ENCODE measurements at regions of chr7 and their contacts with region 1.

Region 1: DNA sequence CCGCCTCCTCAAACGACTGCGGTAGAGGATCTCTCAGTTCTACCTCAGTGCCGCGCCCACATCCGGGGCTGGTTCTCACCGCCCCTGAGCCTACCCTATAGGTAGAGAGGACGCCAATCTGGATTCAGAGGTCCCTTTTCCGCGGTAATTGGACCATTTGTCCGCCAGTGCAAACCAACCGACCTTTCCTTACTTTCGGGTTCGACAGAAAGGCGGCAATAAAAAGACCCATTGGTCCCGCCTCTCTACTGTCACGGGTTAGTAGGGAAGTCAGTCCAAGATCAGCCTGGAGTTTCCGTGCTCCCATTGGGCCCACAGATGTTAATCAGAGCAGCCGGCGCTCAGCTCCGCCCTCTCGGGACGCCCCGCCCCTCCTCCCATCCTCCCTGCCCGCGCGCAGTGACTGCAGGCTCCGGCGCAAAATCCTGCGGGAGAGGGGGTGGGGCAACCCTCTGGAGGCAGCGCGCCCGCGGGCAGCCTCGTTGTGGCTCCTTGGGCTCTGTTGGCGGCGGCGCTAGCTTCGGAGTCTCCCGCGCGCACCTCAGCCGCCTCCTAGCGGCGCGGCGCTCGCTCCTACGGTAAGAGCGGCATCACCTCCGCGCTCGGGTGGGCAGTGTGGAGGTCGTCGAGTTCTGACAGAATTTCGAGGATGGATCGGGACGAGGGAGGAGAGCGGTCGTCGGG is at the starts of genes PHTF2 and TMEM60:
- DNase-seq: peak; percentile 100
- ATAC-seq: peak; percentile 93
- H3K4me3 ChIP-seq: peak within 1 kb of the TSS; percentile 81
- H3K27ac ChIP-seq: peak within 1 kb of the TSS; percentile 90
- H3K4me1 ChIP-seq: peaks cover 6% of the 10 kb centered on the region; the same call in 1 of the 2 replicates
- H3K27me3 ChIP-seq: no peaks in the 10 kb centered on the region
- CTCF ChIP-seq: peak; percentile 53
- POLR2A ChIP-seq: peak; percentile 48
- RAD21 ChIP-seq: peak; percentile 52
- total RNA-seq, gene PHTF2: 65.5 and 69.9 TPM in 2 replicates
- total RNA-seq, gene TMEM60: 9.9 and 19.2 TPM in 2 replicates

Region 2: DNA sequence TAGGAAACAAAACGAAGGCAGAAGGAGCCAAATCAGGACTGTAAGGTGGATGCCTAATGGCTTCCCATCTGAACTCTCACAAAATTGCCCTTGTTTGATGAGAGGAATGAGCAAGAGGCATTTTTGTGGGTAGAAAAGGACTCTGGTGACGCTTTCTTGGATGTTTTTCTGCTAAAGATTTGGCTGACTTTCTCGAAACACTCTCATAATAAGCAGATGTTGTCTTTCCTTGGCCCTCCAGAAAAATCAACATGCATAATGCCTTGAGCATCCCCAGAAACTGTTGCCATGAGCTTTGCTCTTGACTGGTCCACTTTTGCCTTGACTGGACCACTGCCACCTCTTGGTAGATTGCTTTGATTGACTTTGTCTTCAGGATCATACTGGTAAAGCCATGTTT is 247.9 kb before region 1 on chr7:
- CTCF ChIA-PET with region 1: no interaction called
- POLR2A ChIA-PET with region 1: no interaction called
- dilution Hi-C with region 1: no loop called
- in situ Hi-C with region 1: no loop called
- intact Hi-C with region 1: no loop called
- DNase-seq: peak; percentile 22
- ATAC-seq: no peak
- H3K4me3 ChIP-seq: no peak overlapping the region
- H3K27ac ChIP-seq: no peak overlapping the region
- H3K4me1 ChIP-seq: peaks cover 5% of the 10 kb centered on the region; the same call in 1 of the 2 replicates
- H3K27me3 ChIP-seq: no peaks in the 10 kb centered on the region
- CTCF ChIP-seq: no peak
- POLR2A ChIP-seq: no peak
- RAD21 ChIP-seq: no peak

Region 3: DNA sequence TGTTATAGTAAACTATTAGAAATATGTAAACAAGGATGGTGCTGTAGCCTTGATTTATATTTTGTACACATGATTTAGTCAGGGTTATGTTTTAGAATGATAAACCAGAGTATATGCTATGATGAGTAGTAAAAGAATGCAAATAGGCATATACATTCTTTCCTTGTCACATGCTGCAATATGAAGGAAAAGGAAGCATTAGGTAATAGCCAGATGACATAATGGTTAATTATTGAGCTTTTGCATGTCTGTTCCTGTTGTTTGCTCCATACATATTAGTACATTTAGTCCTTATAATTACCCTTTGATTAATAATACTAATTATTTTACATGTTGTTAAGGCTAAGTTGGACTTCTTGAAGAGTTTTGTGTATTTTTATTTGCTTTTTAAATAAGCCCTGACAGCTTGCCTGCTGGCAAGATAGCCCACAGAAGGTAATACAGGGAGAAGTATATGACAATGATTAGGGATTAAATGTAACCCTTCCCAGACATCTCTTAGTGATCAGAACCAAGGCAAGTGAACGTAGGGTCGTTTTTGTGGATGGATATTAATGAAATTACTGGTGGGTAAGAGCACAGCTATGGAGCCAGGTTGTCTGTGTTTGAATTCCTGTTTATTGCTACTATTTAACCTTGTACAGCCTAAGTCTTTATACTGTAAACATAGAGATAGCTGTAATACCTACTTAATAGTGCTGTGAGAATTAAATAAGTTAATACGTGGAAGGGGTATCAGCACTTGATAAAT is 68.4 kb after region 1 on chr7:
- CTCF ChIA-PET with region 1: no interaction called
- POLR2A ChIA-PET with region 1: no interaction called
- dilution Hi-C with region 1: no loop called
- in situ Hi-C with region 1: no loop called
- intact Hi-C with region 1: loop called (anchors 2 kb)
- DNase-seq: peak; percentile 87
- ATAC-seq: peak; percentile 88
- H3K4me3 ChIP-seq: no peak overlapping the region
- H3K27ac ChIP-seq: peak overlapping the region; percentile 50
- H3K4me1 ChIP-seq: peaks cover 5% of the 10 kb centered on the region
- H3K27me3 ChIP-seq: no peaks in the 10 kb centered on the region
- CTCF ChIP-seq: no peak
- POLR2A ChIP-seq: no peak
- RAD21 ChIP-seq: no peak

Region 4: DNA sequence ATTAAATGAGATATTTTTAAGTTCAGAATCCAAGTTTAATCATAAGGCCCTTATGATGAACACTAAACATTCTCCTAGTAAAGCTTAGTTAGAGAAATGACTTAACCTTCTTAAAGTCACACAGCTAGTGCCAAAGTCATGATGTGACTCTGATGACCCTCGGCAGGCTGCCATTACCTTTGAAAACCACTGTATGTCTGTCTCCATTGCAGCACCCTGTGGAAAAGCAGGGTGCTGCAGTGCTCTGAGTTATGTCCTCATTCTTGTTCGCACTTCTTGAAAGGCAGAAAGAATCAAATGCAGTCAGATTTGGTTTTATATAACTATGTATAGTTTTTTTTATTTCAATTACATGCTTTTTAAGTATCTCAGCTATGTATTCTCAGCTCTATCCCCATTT is 105.1 kb after region 1 on chr7:
- CTCF ChIA-PET with region 1: no interaction called
- POLR2A ChIA-PET with region 1: no interaction called
- dilution Hi-C with region 1: no loop called
- in situ Hi-C with region 1: no loop called
- intact Hi-C with region 1: loop called (anchors 10 kb)
- DNase-seq: peak; percentile 2
- ATAC-seq: peak; percentile 25
- H3K4me3 ChIP-seq: no peak overlapping the region
- H3K27ac ChIP-seq: no peak overlapping the region
- H3K4me1 ChIP-seq: no peaks in the 10 kb centered on the region; the same call in 1 of the 2 replicates
- H3K27me3 ChIP-seq: no peaks in the 10 kb centered on the region
- CTCF ChIP-seq: peak; percentile 19; the same call in 1 of the 2 replicates
- POLR2A ChIP-seq: no peak
- RAD21 ChIP-seq: peak; percentile 11; the same call in 1 of the 2 replicates